Right cardiac atrium (tissue), 5 donors: ENCODE measurements at regions of chr2 and their contacts with region 1.

Region 1: DNA sequence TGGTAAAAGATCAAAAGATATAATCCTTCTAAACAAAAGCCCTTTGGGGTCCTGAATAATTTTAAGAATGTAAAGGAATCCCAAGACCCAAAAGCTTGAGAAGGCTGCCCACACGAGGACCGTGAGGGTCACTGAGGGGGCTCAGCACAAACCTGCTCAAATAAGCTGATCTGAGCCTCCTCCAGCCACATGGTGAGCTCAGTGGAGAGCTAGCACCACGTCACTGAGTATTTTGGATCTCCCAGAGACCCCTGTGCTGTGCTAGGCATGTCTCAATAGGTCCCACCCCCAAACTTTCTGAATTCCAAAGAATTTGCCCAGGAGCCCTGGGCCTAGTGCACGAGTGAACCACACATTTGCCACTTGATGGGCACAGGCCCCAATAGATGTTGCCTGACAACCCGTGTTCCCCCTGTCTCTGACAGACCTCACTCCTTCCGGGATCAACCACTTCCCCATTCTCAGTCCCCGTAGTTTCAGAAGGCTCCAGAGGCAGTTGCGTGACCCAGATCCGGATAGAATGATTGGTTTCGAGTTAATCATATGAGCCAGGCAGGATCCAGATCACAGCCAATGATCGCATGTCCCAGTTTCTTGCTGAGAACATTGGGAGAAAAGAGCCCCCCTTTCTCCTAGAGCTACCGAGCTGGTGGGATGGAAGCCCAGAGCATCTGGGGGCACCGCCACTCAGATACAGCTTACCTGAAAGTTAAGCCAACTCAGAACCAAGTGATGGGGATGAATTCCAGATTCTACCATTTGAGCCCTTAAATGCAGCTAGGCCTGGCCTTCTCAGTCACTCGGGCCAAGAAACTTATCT is 203.8 kb downstream of the TNS1 start:
- DNase-seq: no peak
- ATAC-seq: peak in 1 of 2 donors; percentile 12
- H3K4me3 ChIP-seq: no peak overlapping the region
- H3K27ac ChIP-seq: no peak overlapping the region
- H3K4me1 ChIP-seq: peaks cover 6% of the 10 kb centered on the region
- H3K27me3 ChIP-seq: no peaks in the 10 kb centered on the region

Region 2: GRCh38 chr2:217666338-217666737 is 132.6 kb before region 1 on chr2:
- intact Hi-C with region 1: no loop called
- DNase-seq: no peak
- ATAC-seq: peak in 1 of 2 donors; percentile 31
- H3K4me3 ChIP-seq: no peak overlapping the region
- H3K27ac ChIP-seq: no peak overlapping the region
- H3K4me1 ChIP-seq: peaks cover 9% of the 10 kb centered on the region
- H3K27me3 ChIP-seq: no peaks in the 10 kb centered on the region

Region 3: DNA sequence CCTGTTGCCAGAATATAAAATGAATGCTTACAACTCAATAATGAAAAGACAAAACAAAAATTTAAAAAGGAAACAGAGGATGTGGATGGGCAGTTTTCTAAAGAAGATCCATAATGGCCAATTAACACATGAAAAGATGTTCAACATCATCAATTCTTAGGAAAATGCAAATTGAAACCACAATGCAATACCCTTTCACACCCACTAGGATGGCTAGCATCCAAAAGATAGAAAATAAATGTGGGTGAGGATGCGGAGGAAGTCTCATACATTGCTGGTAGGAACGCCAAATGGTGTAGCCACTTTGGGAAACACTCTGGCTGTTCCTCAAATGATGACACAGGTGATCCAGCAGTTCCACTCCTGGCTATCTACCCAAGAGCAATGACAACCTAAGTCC is 73.4 kb after region 1 on chr2:
- intact Hi-C with region 1: loop called in 1 of 4 experiments (anchors 10 kb)
- DNase-seq: no peak
- ATAC-seq: no peak
- H3K4me3 ChIP-seq: no peak overlapping the region
- H3K27ac ChIP-seq: no peak overlapping the region
- H3K4me1 ChIP-seq: no peaks in the 10 kb centered on the region
- H3K27me3 ChIP-seq: no peaks in the 10 kb centered on the region

Region 4: DNA sequence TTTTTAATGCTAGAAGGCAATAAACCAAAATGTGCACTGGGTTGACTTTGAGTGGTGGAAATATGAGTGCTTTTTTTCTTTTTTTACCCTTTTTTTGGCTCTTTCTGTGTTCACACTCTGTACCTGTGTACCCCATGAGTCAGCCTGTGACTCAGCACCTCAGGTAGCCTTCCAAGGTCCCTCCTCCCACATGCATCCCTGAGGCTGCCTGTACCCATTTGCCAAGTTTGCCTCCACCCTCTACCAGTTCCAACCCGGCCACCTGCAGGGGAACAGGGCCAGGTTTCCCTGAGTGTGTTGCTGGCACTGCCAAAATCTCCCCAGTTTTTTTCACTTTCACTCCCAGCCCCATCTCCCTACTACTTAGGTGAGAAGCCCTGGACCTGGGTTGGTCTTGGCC is 353.8 kb after region 1 on chr2:
- intact Hi-C with region 1: no loop called
- DNase-seq: no peak
- ATAC-seq: no peak
- H3K4me3 ChIP-seq: no peak overlapping the region
- H3K27ac ChIP-seq: no peak overlapping the region
- H3K4me1 ChIP-seq: no peaks in the 10 kb centered on the region
- H3K27me3 ChIP-seq: no peaks in the 10 kb centered on the region